GM18951 (cell line): ENCODE measurements at regions of chr4 and their contacts with region 1.

Region 1: DNA sequence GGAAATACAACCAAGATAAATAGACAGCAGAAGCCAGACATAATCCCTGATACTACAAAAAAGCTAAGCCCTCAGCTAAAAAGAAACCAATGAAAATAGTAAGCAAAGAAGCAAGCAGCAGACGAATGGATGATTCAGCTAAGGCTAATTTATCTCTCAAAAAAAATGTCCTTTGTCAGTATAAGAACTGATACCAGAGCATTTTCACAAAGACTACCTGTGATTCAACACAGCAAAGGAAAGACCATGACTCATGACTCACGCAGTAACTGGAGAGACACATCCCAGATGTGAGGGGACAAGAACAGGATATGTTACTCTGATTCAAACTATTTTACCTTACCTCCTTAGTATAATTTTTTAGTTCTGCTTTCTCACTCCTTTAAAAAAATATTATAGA is 22.7 kb upstream of the TMPRSS11F start:
- POLR2A ChIP-seq: no peak

Region 2: DNA sequence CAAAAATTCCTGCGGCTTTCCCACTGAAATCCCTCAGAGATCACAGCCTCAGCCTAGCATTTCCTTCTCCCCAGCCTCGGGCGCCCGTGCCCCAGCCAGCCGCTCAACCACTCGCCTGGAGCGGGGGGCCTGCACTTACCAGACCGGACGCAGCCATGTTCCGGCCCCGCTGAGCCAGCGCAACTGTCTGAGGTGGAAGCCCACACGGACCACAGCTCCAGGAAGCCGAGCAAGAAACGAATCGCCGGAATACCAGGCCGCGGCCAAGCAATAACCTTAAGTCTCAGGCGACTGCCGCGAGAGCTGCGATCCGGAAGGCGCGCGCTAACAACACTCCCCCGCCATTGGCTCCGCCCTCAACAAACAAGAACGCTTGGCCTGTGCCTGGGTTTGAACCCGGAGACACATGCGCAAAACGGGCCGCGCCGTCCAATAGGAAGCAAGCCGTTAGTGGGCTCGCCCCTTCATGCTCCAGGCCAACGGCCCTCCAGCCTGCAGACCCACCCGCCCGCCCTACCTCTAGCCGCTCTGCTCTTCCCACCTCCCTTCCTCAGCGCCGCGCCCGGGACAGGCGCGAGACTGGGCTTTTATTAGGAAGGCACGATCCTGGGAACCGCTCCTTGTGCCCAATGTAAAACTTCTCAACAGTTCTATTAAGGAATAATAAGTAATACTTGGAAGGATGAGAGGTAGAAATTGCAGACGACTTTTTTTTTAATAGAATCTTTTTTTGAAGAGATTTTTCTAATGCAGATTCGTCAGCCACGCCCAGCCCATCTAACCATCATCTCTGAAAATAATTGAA is 607.0 kb before region 1 on chr4 and contains the start of gene CENPC:
- in situ Hi-C with region 1: loop called (anchors 25 kb)
- POLR2A ChIP-seq: peak; percentile 92

Region 3: GRCh38 chr4:67674096-67674495 is 478.3 kb before region 1 on chr4:
- in situ Hi-C with region 1: no loop called
- POLR2A ChIP-seq: no peak